GM12878 (cell line): ENCODE measurements at regions of chr2 and their contacts with region 1.

Region 1: DNA sequence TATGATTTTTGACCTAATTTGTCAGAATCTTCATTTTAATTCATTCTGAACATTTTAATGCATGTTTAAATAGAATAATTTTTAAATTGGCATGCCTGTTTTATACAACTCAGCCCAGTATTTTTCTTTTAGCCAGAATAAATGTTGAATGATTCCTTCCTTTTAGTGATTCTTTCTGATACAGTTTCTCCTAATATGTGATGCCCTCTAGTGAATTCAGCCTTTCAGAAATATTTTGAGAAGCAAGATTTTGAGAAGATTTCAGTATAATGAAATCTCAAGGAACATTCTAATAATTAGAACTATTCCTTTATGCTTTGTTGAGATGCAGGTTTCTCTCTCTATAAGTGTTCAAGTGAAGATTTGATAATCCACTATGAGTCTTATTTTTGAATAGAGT is 28.5 kb downstream of the LCLAT1 start:
- DNase-seq: no peak
- ATAC-seq: no peak
- H3K4me3 ChIP-seq: no peak overlapping the region
- H3K27ac ChIP-seq: no peak overlapping the region
- H3K4me1 ChIP-seq: peaks cover 3% of the 10 kb centered on the region; the same call in 1 of the 2 replicates
- H3K27me3 ChIP-seq: no peaks in the 10 kb centered on the region
- CTCF ChIP-seq: no peak; a peak in 1 of 6 replicates
- EP300 ChIP-seq: no peak
- POLR2A ChIP-seq: no peak
- RAD21 ChIP-seq: peak; percentile 35

Region 2: GRCh38 chr2:30225131-30225762 is 250.3 kb before region 1 on chr2:
- CTCF ChIA-PET with region 1: interaction called, 4 read pairs
- POLR2A ChIA-PET with region 1: interaction called, 3 read pairs
- RAD21 ChIA-PET with region 1: interaction called, 5 read pairs
- SMC1A ChIA-PET with region 1: interaction called, 26 read pairs
- in situ Hi-C with region 1: no loop called
- intact Hi-C with region 1: loop called (anchors 10 kb)
- DNase-seq: no peak
- ATAC-seq: peak; percentile 72
- H3K4me3 ChIP-seq: peak overlapping the region; percentile 56
- H3K27ac ChIP-seq: peak overlapping the region; percentile 95
- H3K4me1 ChIP-seq: peaks cover 45% of the 10 kb centered on the region
- H3K27me3 ChIP-seq: no peaks in the 10 kb centered on the region
- CTCF ChIP-seq: 0 out of 6 replicates have a peak, but pooled peaks of 1 of the 3 experiments have one; percentile 7
- EP300 ChIP-seq: no peak
- POLR2A ChIP-seq: peak; percentile 60
- RAD21 ChIP-seq: no peak

Region 3: DNA sequence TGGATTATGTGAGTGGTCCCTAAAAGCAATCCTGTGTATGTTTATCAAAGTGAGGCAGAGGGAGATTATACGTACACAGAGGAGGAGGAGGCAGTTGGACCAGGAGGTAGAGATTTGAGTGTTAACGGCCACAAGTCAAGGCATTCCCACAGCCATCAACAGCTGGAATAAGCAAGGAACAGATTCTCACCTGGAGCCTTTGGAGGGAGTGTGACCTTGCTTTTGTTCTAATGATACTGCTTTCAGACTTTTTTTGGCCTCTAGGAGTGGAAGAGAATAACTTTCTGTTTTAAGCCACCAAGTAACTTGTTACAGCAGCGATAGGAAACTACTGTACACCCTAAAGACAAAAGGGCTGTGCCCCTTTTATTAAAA is 10.4 kb before region 1 on chr2:
- CTCF ChIA-PET with region 1: interaction called, 3 read pairs
- POLR2A ChIA-PET with region 1: no interaction called
- RAD21 ChIA-PET with region 1: interaction called, 3 read pairs
- SMC1A ChIA-PET with region 1: interaction called, 16 read pairs
- in situ Hi-C with region 1: no loop called
- intact Hi-C with region 1: no loop called
- DNase-seq: no peak
- ATAC-seq: no peak
- H3K4me3 ChIP-seq: 0 out of 2 replicates have a peak overlapping the region, but pooled peaks have one; percentile 18
- H3K27ac ChIP-seq: no peak overlapping the region
- H3K4me1 ChIP-seq: no peaks in the 10 kb centered on the region
- H3K27me3 ChIP-seq: no peaks in the 10 kb centered on the region
- CTCF ChIP-seq: no peak
- EP300 ChIP-seq: no peak
- POLR2A ChIP-seq: no peak
- RAD21 ChIP-seq: no peak